Ovary (tissue), 10 donors: ENCODE measurements at regions of chr5 and their contacts with region 1.

Region 1: DNA sequence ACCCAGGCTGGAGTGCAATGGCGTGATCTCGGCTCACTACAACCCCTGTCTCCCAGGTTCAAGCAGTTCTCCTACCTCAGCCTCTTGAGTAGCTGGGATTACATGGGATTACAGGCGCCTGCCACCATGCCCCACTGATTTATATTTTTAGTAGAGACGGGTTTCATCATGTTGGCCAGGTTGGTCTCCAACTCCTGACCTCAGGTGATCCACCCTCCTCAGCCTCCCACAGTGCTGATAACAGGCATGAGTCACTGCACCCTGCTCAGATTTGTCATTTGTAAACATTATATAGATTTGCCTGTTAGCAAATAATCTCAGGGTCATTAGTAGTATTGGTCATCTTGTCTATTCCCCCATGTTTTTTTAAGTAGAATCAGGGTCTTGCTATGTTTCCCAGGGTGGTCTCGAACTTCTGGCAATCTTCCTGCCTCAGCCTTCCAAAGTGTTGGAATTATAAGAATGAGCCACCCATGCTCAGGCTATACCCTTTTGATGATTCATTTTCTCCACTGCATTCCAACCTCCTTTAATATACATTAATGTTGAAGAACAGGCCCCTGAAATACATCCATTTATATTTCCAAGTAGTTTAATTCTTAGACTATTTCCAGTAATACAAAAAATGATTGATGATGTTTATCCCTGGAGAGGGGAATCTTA is 17.3 kb downstream of the CENPH start:
- DNase-seq: no peak
- H3K4me3 ChIP-seq: no peak overlapping the region
- H3K27ac ChIP-seq: no peak overlapping the region
- H3K4me1 ChIP-seq: no peaks in the 10 kb centered on the region
- H3K27me3 ChIP-seq: no peaks in the 10 kb centered on the region
- CTCF ChIP-seq: no peak
- EP300 ChIP-seq: no peak
- POLR2A ChIP-seq: no peak

Region 2: GRCh38 chr5:67752331-67752673 is 1454.4 kb before region 1 on chr5:
- intact Hi-C with region 1: loop called in 1 of 4 experiments (anchors 5 kb)
- DNase-seq: no peak
- H3K4me3 ChIP-seq: no peak overlapping the region
- H3K27ac ChIP-seq: no peak overlapping the region
- H3K4me1 ChIP-seq: no peaks in the 10 kb centered on the region
- H3K27me3 ChIP-seq: no peaks in the 10 kb centered on the region
- CTCF ChIP-seq: no peak
- EP300 ChIP-seq: no peak
- POLR2A ChIP-seq: no peak

Region 3: DNA sequence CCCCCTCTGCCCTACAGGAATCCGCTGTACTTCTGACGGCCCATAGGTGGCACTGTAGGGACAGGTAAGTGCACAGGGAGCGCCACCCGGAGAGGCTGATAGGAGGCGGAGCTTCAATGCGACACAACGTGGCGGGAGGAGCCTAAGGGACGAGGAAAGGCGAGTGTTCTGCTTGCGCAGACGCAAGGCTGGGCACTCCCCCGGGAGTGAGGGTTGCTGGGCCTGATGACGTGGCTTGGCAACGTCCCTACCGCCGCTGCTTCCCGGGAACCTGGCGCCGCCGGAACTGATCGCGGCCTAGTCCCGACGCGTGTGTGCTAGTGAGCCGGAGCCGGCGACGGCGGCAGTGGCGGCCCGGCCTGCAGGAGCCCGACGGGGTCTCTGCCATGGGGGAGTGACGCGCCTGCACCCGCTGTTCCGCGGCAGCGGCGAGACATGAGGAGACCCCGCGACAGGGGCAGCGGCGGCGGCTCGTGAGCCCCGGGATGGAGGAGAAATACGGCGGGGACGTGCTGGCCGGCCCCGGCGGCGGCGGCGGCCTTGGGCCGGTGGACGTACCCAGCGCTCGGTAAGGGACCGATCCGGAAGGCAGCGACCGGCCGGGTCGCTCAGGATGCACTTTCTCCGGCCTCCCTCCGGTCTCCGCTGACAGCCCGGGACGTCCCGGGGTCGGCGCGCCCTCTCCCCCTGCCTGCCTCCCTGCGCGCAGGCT is 112.7 kb before region 1 on chr5 and contains the start of gene SLC30A5:
- intact Hi-C with region 1: no loop called
- DNase-seq: peak; percentile 98 to 99 (median 99)
- H3K4me3 ChIP-seq: peak within 1 kb of the TSS; percentile 80
- H3K27ac ChIP-seq: peak within 1 kb of the TSS; percentile 63 to 86
- H3K4me1 ChIP-seq: peaks cover 2% of the 10 kb centered on the region
- H3K27me3 ChIP-seq: no peaks in the 10 kb centered on the region
- CTCF ChIP-seq: peak; percentile 85 to 93 (median 92)
- EP300 ChIP-seq: no peak
- POLR2A ChIP-seq: peak; percentile 74
- total RNA-seq, gene SLC30A5: 34.9 to 61.5 (median 46.5) TPM